HCT116 (cell line): ENCODE measurements at regions of chr10 and their contacts with region 1.

Region 1: GRCh38 chr10:98748298-98748697 is 301.6 kb upstream of the HPS1 start:
- DNase-seq: peak; percentile 37
- ATAC-seq: peak; percentile 79
- H3K4me3 ChIP-seq: no peak overlapping the region
- H3K27ac ChIP-seq: no peak overlapping the region
- H3K4me1 ChIP-seq: no peaks in the 10 kb centered on the region
- H3K27me3 ChIP-seq: peaks cover 3% of the 10 kb centered on the region; the same call in 1 of the 2 replicates
- CTCF ChIP-seq: peak; percentile 59 to 65 (median 59); a peak in 5 of 6 replicates
- POLR2A ChIP-seq: no peak
- RAD21 ChIP-seq: peak; percentile 58

Region 2: DNA sequence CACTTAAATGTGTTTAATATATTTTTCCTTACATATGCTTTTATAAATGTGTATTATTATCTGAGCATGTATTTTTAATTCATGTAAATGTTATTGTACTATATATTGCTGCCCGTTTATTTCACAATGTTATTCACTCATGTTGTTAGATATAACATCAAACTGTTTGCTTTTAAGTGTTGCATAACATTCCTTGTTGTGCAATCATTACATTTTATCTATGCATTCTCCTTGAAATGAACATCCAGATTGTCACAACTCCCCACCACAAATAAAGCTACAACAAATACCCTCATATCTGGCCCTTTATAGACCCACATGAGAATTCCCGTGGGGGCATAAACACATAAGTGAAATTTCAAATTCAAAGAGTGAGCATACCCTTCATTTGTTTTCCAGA is 223.2 kb after region 1 on chr10:
- CTCF ChIA-PET with region 1: no interaction called
- POLR2A ChIA-PET with region 1: no interaction called
- RAD21 ChIA-PET with region 1: no interaction called
- intact Hi-C with region 1: no loop called
- DNase-seq: no peak
- ATAC-seq: no peak
- H3K4me3 ChIP-seq: no peak overlapping the region
- H3K27ac ChIP-seq: no peak overlapping the region
- H3K4me1 ChIP-seq: no peaks in the 10 kb centered on the region
- H3K27me3 ChIP-seq: 0 out of 2 replicates have a peak, but pooled peaks cover 7% of the 10 kb centered on the region
- CTCF ChIP-seq: no peak
- POLR2A ChIP-seq: no peak
- RAD21 ChIP-seq: no peak

Region 3: DNA sequence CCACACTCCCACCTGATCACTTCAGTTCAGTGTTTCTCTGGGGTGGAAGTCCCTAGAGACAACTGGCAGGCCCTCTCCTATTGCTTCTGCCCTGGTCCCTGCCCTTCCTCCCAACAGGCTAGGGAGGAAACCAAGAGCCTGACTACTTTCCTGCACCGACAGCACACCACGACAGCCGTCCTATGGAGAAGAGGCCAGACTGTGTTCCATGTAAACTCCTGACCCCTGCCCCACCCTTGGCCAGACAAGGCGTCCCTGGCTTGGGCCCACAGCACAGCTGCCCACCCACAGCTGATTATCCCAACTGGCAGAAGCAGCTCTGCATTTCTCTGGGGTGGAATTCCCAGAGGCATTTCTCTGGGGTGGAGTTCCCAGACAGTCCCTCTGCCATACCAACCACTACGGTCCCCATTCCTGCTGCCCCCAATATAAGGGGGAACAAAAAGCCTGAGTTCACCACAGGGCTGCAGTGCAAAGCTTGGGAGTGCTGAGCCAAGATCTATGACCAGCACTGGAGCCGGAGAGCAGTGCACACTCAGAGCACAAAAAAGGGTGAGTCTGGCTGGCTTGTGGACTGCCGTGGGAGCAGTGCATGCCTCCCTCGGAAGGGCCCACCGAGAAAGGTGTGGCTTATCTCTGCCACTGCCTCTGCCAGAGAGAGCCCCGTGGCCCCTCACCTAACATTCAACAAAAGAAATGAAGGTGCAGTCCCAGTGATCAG is 293.9 kb after region 1 on chr10:
- CTCF ChIA-PET with region 1: interaction called, 4 read pairs
- POLR2A ChIA-PET with region 1: no interaction called
- RAD21 ChIA-PET with region 1: no interaction called
- intact Hi-C with region 1: loop called (anchors 2 kb)
- DNase-seq: no peak
- ATAC-seq: peak; percentile 67
- H3K4me3 ChIP-seq: no peak overlapping the region
- H3K27ac ChIP-seq: no peak overlapping the region
- H3K4me1 ChIP-seq: no peaks in the 10 kb centered on the region
- H3K27me3 ChIP-seq: peaks cover 8% of the 10 kb centered on the region; the same call in 1 of the 2 replicates
- CTCF ChIP-seq: no peak
- POLR2A ChIP-seq: no peak
- RAD21 ChIP-seq: no peak

Region 4: DNA sequence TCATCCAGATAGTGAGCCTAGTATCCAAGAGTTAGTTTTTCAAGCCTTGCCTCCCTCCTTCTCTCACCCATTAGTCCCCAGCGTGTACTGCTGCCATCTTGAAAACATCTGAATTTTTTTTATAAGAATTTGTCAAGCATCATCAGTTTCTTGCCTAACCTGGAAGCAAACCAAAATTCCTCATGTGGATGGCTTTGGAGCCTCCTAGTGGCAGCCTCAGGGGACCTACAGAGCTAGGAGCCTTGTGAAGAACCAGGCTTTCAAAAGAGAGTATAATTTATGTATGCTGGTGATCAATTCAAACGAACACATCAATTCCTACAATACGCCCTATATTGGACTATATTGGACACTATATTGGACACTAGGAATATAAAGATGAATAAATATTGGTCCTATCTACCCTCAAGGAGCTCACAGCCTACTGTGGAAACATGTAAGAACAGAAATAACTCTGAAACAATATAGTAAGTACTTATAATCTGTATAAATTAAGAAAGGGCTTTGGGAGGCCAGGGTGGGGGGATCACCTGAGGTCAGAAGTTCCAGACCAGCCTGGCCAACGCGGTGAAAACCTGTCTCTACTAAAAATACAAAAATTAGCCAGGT is 423.9 kb after region 1 on chr10:
- CTCF ChIA-PET with region 1: interaction called, 4 read pairs
- POLR2A ChIA-PET with region 1: no interaction called
- RAD21 ChIA-PET with region 1: no interaction called
- intact Hi-C with region 1: loop called (anchors 10 kb)
- DNase-seq: peak; percentile 51
- ATAC-seq: peak; percentile 90
- H3K4me3 ChIP-seq: no peak overlapping the region
- H3K27ac ChIP-seq: no peak overlapping the region
- H3K4me1 ChIP-seq: no peaks in the 10 kb centered on the region
- H3K27me3 ChIP-seq: peaks cover 47% of the 10 kb centered on the region
- CTCF ChIP-seq: peak; percentile 55 to 89 (median 89); a peak in 5 of 6 replicates
- POLR2A ChIP-seq: no peak
- RAD21 ChIP-seq: peak; percentile 77

Region 5: GRCh38 chr10:99248824-99249223 is 500.5 kb after region 1 on chr10:
- CTCF ChIA-PET with region 1: interaction called, 7 read pairs
- POLR2A ChIA-PET with region 1: no interaction called
- RAD21 ChIA-PET with region 1: no interaction called
- intact Hi-C with region 1: loop called (anchors 2 kb)
- DNase-seq: no peak
- ATAC-seq: no peak
- H3K4me3 ChIP-seq: no peak overlapping the region
- H3K27ac ChIP-seq: no peak overlapping the region
- H3K4me1 ChIP-seq: no peaks in the 10 kb centered on the region
- H3K27me3 ChIP-seq: no peaks in the 10 kb centered on the region
- CTCF ChIP-seq: no peak
- POLR2A ChIP-seq: no peak
- RAD21 ChIP-seq: no peak

Region 6: GRCh38 chr10:99276848-99277486 is 528.7 kb after region 1 on chr10:
- CTCF ChIA-PET with region 1: interaction called, 7 read pairs
- POLR2A ChIA-PET with region 1: no interaction called
- RAD21 ChIA-PET with region 1: no interaction called
- intact Hi-C with region 1: loop called (anchors 1 kb)
- DNase-seq: peak; percentile 46
- ATAC-seq: peak; percentile 81
- H3K4me3 ChIP-seq: no peak overlapping the region
- H3K27ac ChIP-seq: no peak overlapping the region
- H3K4me1 ChIP-seq: no peaks in the 10 kb centered on the region
- H3K27me3 ChIP-seq: peaks cover 15% of the 10 kb centered on the region
- CTCF ChIP-seq: peak; percentile 60 to 86 (median 65); a peak in 5 of 6 replicates
- POLR2A ChIP-seq: no peak
- RAD21 ChIP-seq: peak; percentile 85